ENCODE measurements at regions of chr17 and their contacts with region 1.

Region 1: DNA sequence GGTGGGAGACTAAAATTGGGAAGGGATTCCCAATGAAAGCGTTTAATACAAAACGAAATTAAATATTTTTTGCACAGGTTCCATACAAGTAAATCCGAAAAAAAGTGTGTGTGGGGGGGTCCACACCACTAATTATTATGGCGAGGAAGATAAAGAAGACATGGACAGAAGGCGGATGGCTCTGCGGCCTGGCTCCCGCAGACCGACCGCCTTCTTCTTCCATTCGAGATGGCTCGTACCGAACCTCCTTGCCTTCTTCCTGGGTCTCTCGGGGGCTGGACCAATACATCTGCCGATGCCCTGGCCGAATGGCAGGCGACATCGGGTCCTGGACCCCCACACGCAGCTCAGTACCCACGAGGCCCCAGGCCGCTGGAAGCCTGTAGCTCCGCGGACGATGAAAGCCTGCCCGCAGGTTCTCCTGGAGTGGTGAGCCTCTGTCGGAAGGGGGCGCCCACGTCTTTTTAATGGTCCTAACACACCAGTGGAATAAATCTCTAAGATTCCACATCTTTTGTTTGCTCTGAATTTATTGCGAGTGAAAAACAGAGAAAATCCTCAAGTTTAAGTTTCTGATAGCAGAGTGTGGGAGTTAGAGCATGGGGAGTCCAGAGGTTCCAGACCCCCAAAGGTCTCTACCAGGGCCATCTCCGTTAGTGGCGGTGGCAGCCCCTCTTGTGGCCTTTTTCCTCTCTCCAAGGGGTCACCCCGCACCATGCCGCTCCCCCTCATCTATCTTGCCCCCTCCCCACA is 1.4 kb downstream of the PRAC2 start:
- DNase-seq: peak; percentile 92
- H3K4me3 ChIP-seq: peak overlapping the region; percentile 72
- H3K27ac ChIP-seq: peak overlapping the region; percentile 98
- H3K4me1 ChIP-seq: peaks cover 32% of the 10 kb centered on the region
- H3K27me3 ChIP-seq: no peaks in the 10 kb centered on the region
- CTCF ChIP-seq: peak; percentile 90

Region 2: DNA sequence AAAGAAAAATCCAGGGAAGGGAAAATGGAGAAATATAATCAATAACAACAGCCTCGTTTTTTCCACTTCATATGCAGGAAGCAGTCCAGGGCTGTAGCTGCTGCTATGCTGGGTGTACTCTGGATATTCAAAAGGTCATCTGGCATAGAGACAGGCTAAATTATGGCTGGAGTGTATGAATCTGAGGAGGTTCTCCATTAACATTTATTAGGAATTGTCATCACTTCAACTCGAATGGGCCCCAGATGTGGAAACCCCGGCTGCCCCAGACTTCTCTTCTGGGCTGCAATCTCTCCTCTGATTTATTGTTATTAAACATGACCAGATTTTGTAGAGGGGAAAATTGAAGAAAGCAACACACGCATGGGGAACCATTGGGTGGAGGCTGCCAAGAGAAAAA is 260.9 kb before region 1 on chr17:
- CTCF ChIA-PET with region 1: no interaction called
- POLR2A ChIA-PET with region 1: no interaction called
- intact Hi-C with region 1: no loop called
- DNase-seq: no peak
- H3K4me3 ChIP-seq: no peak overlapping the region
- H3K27ac ChIP-seq: no peak overlapping the region
- H3K4me1 ChIP-seq: no peaks in the 10 kb centered on the region
- H3K27me3 ChIP-seq: no peaks in the 10 kb centered on the region
- CTCF ChIP-seq: no peak

Region 3: GRCh38 chr17:48671697-48672171 is 52.7 kb before region 1 on chr17:
- CTCF ChIA-PET with region 1: interaction called, 17 read pairs
- POLR2A ChIA-PET with region 1: no interaction called
- intact Hi-C with region 1: no loop called
- DNase-seq: peak; percentile 90
- H3K4me3 ChIP-seq: peak overlapping the region; percentile 42
- H3K27ac ChIP-seq: peak overlapping the region; percentile 52
- H3K4me1 ChIP-seq: peaks cover 6% of the 10 kb centered on the region
- H3K27me3 ChIP-seq: no peaks in the 10 kb centered on the region
- CTCF ChIP-seq: peak; percentile 92

Region 4: GRCh38 chr17:48791128-48792032 is 67.0 kb after region 1 on chr17:
- CTCF ChIA-PET with region 1: interaction called, 34 read pairs
- POLR2A ChIA-PET with region 1: no interaction called
- intact Hi-C with region 1: loop called (anchors 1 kb)
- DNase-seq: peak; percentile 94
- H3K4me3 ChIP-seq: no peak overlapping the region
- H3K27ac ChIP-seq: no peak overlapping the region
- H3K4me1 ChIP-seq: peaks cover 9% of the 10 kb centered on the region
- H3K27me3 ChIP-seq: no peaks in the 10 kb centered on the region
- CTCF ChIP-seq: peak; percentile 95

Region 5: GRCh38 chr17:48830840-48831548 is 106.6 kb after region 1 on chr17 and contains the start of gene CALCOCO2:
- CTCF ChIA-PET with region 1: no interaction called
- POLR2A ChIA-PET with region 1: no interaction called
- intact Hi-C with region 1: no loop called
- DNase-seq: peak; percentile 96
- H3K4me3 ChIP-seq: peak within 1 kb of the TSS; percentile 83
- H3K27ac ChIP-seq: peak within 1 kb of the TSS; percentile 87
- H3K4me1 ChIP-seq: no peaks in the 10 kb centered on the region
- H3K27me3 ChIP-seq: no peaks in the 10 kb centered on the region
- CTCF ChIP-seq: peak; percentile 22; the same call in 1 of the 2 replicates
- total RNA-seq, gene CALCOCO2: 88.4 and 118 TPM in 2 replicates

Region 6: DNA sequence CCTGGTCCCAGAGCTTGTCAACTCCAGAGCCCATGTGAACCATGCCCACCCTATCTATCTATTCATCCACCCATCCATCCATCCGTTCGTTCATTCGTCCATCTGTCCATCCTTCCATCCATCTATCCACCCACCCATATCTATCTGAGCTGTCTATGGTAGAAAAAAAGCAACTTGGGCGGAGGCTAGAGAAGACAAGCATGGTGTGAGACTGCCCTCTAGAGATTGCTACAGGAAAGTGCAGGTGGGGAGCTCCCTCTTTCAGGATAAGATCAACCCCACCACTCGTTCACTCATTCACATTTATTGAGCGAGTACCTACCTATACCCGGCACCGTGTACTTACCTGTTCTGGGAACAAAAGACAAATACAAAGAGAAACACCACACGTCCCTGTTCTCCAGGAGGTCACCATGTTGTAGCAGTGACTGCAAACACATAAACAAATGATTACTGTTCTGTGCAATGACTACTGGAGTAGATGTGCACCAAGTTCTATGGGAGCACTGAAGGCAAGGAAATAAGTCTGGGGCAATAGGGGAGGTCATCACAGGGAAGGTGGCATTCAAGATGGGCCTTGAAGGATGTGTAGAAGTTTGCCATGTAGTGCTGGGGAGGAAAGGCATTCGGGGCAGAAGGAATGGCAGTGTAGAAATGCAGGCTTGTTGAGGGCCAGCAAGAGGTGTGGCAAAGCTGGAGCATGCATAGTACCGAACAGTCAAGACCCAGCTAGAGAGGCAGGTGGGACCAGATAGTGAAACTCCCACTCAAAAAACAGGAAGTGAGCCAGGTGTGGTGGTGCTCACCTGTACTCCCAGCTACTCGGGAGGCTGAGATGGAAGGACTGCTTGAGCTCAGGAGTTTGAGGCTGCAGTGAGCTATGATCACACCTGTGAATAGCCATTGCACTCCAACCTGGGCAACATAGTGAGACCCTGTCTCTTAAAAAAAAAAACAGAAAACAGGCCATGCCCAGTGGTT is 154.8 kb after region 1 on chr17:
- CTCF ChIA-PET with region 1: interaction called, 37 read pairs
- POLR2A ChIA-PET with region 1: interaction called, 3 read pairs
- intact Hi-C with region 1: loop called (anchors 2 kb)
- DNase-seq: peak; percentile 82
- H3K4me3 ChIP-seq: no peak overlapping the region
- H3K27ac ChIP-seq: no peak overlapping the region
- H3K4me1 ChIP-seq: no peaks in the 10 kb centered on the region
- H3K27me3 ChIP-seq: no peaks in the 10 kb centered on the region
- CTCF ChIP-seq: peak; percentile 95

Region 7: GRCh38 chr17:48970865-48971687 is 246.6 kb after region 1 on chr17:
- CTCF ChIA-PET with region 1: no interaction called
- POLR2A ChIA-PET with region 1: interaction called, 12 read pairs
- intact Hi-C with region 1: no loop called
- DNase-seq: no peak
- H3K4me3 ChIP-seq: no peak overlapping the region
- H3K27ac ChIP-seq: peak overlapping the region; percentile 29
- H3K4me1 ChIP-seq: peaks cover 16% of the 10 kb centered on the region
- H3K27me3 ChIP-seq: no peaks in the 10 kb centered on the region
- CTCF ChIP-seq: no peak

Measured in A673 (cell line).